Mammary epithelial cell (primary cell): ENCODE measurements at regions of chr4 and their contacts with region 1.

Region 1: DNA sequence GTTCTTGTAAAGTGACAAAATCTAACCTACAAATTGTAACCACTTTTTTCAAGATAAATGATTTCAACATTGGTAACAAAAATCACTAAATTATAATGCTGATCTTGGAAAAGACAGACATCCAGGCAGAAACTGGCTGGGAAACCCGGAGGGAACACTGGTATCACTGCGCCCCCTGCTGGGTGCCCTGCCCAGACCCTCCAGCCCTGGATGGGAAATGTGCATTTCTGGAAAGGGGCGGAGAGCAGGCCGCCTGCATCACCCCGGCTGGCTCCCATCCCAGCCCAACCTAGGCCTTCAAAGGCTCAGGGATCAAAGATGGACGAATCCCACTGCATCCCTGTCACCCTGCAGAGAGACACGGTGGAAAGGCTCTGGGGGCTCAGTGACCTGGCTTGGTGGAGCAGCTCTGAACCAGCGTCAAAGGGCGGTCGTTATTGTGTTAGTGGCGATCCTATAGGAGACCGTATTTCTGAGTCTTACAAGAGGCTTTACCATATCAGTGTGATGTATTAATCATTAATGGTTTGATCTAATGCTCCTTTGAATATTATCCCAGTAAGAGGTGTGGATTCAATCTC is 37.3 kb downstream of the ACOX3 start:
- DNase-seq: peak; percentile 56
- H3K4me3 ChIP-seq: no peak overlapping the region
- H3K27ac ChIP-seq: no peak overlapping the region
- H3K4me1 ChIP-seq: peaks cover 16% of the 10 kb centered on the region
- H3K27me3 ChIP-seq: no peaks in the 10 kb centered on the region
- CTCF ChIP-seq: peak; percentile 93

Region 2: GRCh38 chr4:8176547-8177399 is 226.5 kb before region 1 on chr4:
- CTCF ChIA-PET with region 1: no interaction called
- dilution Hi-C with region 1: no loop called
- in situ Hi-C with region 1: no loop called
- intact Hi-C with region 1: loop called (anchors 1 kb)
- DNase-seq: peak; percentile 51
- H3K4me3 ChIP-seq: no peak overlapping the region
- H3K27ac ChIP-seq: no peak overlapping the region
- H3K4me1 ChIP-seq: peaks cover 2% of the 10 kb centered on the region
- H3K27me3 ChIP-seq: no peaks in the 10 kb centered on the region
- CTCF ChIP-seq: peak; percentile 96 to 98

Region 3: DNA sequence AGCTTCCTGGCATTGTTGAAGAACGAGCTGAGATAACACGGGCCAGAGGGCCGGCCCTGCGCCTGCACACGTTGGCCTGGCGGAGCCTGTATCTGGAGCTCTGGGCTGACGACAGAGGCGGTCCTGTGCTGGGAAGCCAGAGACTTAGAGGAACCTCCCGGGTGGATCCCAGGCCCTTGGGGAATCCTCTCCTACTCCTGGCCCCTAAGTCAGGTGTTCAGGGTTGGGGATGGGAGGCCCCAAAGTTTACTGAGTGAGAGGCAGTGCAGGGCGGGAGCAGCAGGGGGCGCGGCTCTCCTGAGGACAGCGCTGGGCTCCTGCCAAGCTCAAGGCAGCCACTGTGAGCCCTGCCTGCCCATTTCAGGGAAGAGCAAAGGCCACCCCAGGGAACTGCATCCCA is 136.2 kb before region 1 on chr4:
- CTCF ChIA-PET with region 1: no interaction called
- dilution Hi-C with region 1: loop called (anchors 5 kb)
- in situ Hi-C with region 1: no loop called
- intact Hi-C with region 1: loop called (anchors 1 kb)
- DNase-seq: no peak
- H3K4me3 ChIP-seq: no peak overlapping the region
- H3K27ac ChIP-seq: no peak overlapping the region
- H3K4me1 ChIP-seq: peaks cover 5% of the 10 kb centered on the region
- H3K27me3 ChIP-seq: peaks cover 13% of the 10 kb centered on the region
- CTCF ChIP-seq: peak; percentile 47 to 60

Region 4: DNA sequence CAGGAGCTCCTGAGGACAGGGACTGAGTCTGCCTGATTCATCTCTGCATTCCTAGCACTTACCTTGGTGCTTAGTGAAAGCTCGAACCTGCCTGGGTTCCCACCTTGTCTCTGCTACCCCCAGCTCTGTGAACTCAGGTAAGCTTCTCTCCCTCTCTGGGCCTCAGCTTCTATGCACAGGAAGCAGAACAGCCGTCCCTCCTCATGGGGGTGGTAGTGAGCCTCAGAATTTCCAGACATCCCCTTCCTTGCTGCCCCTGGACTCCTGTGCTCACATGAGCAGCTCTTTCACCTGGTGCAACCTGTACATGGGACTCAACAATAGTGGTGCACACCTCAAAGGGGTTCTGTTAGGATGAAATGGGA is 82.9 kb before region 1 on chr4:
- CTCF ChIA-PET with region 1: interaction called, 5 read pairs
- dilution Hi-C with region 1: no loop called
- in situ Hi-C with region 1: no loop called
- intact Hi-C with region 1: loop called (anchors 1 kb)
- DNase-seq: no peak
- H3K4me3 ChIP-seq: no peak overlapping the region
- H3K27ac ChIP-seq: no peak overlapping the region
- H3K4me1 ChIP-seq: peaks cover 44% of the 10 kb centered on the region
- H3K27me3 ChIP-seq: no peaks in the 10 kb centered on the region
- CTCF ChIP-seq: peak; percentile 35 to 43

Region 5: GRCh38 chr4:8440492-8441341 is 37.5 kb after region 1 on chr4 and contains the starts of genes ACOX3 and TRMT44:
- CTCF ChIA-PET with region 1: no interaction called
- dilution Hi-C with region 1: no loop called
- in situ Hi-C with region 1: no loop called
- intact Hi-C with region 1: loop called (anchors 1 kb)
- DNase-seq: peak; percentile 94
- H3K4me3 ChIP-seq: peak within 1 kb of the TSS; percentile 63 to 87 (median 69)
- H3K27ac ChIP-seq: peak within 1 kb of the TSS; percentile 92
- H3K4me1 ChIP-seq: peaks cover 42% of the 10 kb centered on the region
- H3K27me3 ChIP-seq: no peaks in the 10 kb centered on the region
- CTCF ChIP-seq: no peak
- total RNA-seq, gene ACOX3: 19.6 to 94.0 TPM
- total RNA-seq, gene TRMT44: 18.5 to 20.3 TPM